Esophagus muscularis mucosa (tissue), 4 donors: ENCODE measurements at regions of chr9 and their contacts with region 1.

Region 1: GRCh38 chr9:121059998-121060636 is 10.0 kb upstream of the C5 start:
- DNase-seq: no peak
- H3K4me3 ChIP-seq: no peak overlapping the region
- H3K27ac ChIP-seq: no peak overlapping the region
- H3K4me1 ChIP-seq: peaks cover 0 to 7% (median 2%) of the 10 kb centered on the region in 4 donors
- H3K27me3 ChIP-seq: no peaks in the 10 kb centered on the region
- CTCF ChIP-seq: peak; percentile 70 to 78 (median 70)
- EP300 ChIP-seq: no peak
- POLR2A ChIP-seq: no peak

Region 2: DNA sequence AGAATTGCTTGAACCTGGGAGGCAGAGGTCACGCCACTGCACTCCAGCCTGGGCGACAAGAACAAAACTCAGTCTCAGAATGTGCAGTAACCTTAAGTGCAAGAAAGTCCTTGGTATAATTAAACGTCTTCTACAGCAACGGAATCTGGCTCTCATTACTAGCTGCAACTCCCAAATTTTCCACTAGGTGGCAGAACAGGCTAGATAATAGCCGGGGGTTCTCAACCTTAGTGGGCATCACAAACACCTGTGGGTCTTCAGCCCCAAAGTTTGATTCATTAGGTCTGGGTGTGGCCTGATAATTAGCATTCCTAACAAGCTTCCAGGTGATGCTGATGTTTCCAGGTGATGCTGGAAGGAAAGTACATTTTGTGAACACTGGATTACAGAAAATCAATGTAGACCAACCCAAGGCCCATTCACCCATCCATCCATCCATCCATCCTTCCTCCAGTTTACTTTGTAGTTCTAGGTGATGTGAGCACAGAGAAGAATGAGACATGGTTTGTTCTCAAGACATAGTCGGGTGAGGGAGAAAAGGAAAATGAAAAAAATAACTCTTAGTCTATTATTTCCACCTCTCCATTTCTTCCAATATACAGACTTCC is 304.2 kb before region 1 on chr9:
- intact Hi-C with region 1: loop called (anchors 2 kb)
- DNase-seq: peak; percentile 93
- H3K4me3 ChIP-seq: no peak overlapping the region
- H3K27ac ChIP-seq: peak overlapping the region in 1 of 4 donors; percentile 8
- H3K4me1 ChIP-seq: peaks cover 3 to 20% (median 9%) of the 10 kb centered on the region in 4 donors
- H3K27me3 ChIP-seq: no peaks in the 10 kb centered on the region
- CTCF ChIP-seq: peak; percentile 85 to 88 (median 87)
- EP300 ChIP-seq: no peak
- POLR2A ChIP-seq: no peak

Region 3: GRCh38 chr9:120774722-120775121 is 285.4 kb before region 1 on chr9:
- intact Hi-C with region 1: no loop called
- DNase-seq: no peak
- H3K4me3 ChIP-seq: no peak overlapping the region
- H3K27ac ChIP-seq: no peak overlapping the region
- H3K4me1 ChIP-seq: no peaks in the 10 kb centered on the region
- H3K27me3 ChIP-seq: no peaks in the 10 kb centered on the region
- CTCF ChIP-seq: no peak
- EP300 ChIP-seq: no peak
- POLR2A ChIP-seq: no peak

Region 4: GRCh38 chr9:120982836-120983235 is 77.3 kb before region 1 on chr9:
- intact Hi-C with region 1: loop called (anchors 5 kb)
- DNase-seq: no peak
- H3K4me3 ChIP-seq: no peak overlapping the region
- H3K27ac ChIP-seq: no peak overlapping the region
- H3K4me1 ChIP-seq: no peaks in the 10 kb centered on the region
- H3K27me3 ChIP-seq: no peaks in the 10 kb centered on the region
- CTCF ChIP-seq: no peak
- EP300 ChIP-seq: no peak
- POLR2A ChIP-seq: no peak